ENCODE measurements at regions of chr2 and their contacts with region 1.

Region 1: DNA sequence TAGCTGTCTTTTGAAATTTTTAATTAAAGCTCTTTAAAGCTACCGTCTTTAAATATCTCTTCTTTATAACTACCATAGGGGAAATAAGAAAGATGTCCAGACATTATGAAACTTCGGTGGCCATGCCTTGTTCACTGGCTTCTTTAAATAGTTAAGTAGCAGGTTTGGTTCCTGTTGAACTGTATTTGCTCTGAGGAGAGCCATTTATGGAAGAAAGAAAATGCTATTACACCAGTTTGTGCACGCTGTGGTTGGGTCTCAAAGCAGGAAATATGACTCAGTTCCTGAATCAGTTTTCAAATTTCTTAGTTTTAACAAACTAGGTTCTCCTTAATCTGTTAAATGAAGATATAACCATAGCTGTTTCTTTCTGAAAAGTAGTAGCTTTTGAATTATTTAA is 12.2 kb downstream of the ARPC2 start:
- DNase-seq: peak; percentile 85
- H3K4me3 Mint-ChIP-seq: peak overlapping the region; percentile 80
- H3K27ac Mint-ChIP-seq: peak overlapping the region; percentile 93
- H3K4me1 Mint-ChIP-seq: peaks cover 58% of the 10 kb centered on the region
- H3K27me3 Mint-ChIP-seq: no peaks in the 10 kb centered on the region

Region 2: GRCh38 chr2:218186355-218186766 is 42.9 kb before region 1 on chr2:
- intact Hi-C with region 1: loop called (anchors 1 kb)
- DNase-seq: peak; percentile 90
- H3K4me3 Mint-ChIP-seq: no peak overlapping the region
- H3K27ac Mint-ChIP-seq: no peak overlapping the region
- H3K4me1 Mint-ChIP-seq: peaks cover 8% of the 10 kb centered on the region
- H3K27me3 Mint-ChIP-seq: peaks cover 13% of the 10 kb centered on the region

Region 3: GRCh38 chr2:218245214-218245613 is 16.0 kb after region 1 on chr2:
- intact Hi-C with region 1: loop called (anchors 2 kb)
- DNase-seq: no peak
- H3K4me3 Mint-ChIP-seq: no peak overlapping the region
- H3K27ac Mint-ChIP-seq: peak overlapping the region; percentile 70
- H3K4me1 Mint-ChIP-seq: peaks cover 19% of the 10 kb centered on the region
- H3K27me3 Mint-ChIP-seq: no peaks in the 10 kb centered on the region

Measured in activated CD4-positive, alpha-beta T cell treated with anti-CD3 and anti-CD28 coated beads, Interleukin-2, amount 10 ng/mL, durations not matched to agents 24 days and 14 days (primary cell).